Activated CD4-positive, alpha-beta memory T cell treated with anti-CD3 and anti-CD28 coated beads, Interleukin-2, amount 10 ng/mL, durations not matched to agents 7 days and 5 days (primary cell): ENCODE measurements at regions of chr2 and their contacts with region 1.

Region 1: DNA sequence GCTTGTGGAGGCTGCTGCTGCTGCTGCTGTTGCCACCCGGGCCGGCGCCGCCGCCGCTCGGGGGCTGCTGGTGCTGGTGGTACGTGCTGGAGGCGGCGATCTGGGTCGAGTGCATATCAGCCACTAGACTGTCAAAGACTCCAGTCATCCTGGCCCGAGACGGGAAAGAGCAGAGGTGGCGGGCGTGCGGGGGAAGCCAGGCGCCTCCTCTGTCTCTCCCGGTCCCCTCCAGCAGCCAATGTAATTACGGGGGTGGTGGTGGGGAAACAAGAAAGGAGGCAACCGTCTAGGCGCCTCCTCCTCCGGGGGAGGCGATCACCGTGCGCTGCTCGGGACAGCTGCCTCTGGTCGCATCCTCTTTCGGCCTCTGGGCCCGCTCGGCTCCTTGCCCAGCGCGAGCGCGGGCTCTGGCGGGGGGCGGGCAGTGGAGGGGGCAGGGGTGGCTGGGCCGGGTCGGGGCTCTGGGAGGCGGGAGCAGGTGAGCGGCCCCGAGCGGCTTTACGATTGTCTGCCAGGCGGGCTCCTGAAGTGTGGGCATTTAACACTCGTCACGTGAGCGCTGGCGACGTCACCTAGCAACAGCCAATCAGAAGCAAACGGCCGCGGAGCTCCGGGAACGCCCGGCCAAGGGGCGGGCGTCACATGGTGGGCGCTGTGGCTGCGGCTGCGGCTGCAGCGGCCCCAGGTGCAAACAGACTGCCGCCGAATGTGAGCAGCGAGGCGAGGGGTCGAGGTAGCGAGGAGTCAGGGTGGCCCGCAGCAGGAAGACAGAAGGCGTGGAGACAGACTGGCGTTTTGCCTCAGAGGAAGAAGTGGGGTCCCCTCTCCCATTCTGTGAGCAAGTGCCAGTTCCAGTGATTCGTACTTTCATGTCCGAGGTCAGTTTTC is at the start of gene DLX2:
- DNase-seq: peak; percentile 78
- H3K4me3 Mint-ChIP-seq: peak within 1 kb of the TSS; percentile 73
- H3K27ac Mint-ChIP-seq: no peak within 1 kb of the TSS
- H3K4me1 Mint-ChIP-seq: peaks cover 58% of the 10 kb centered on the region
- H3K27me3 Mint-ChIP-seq: peaks cover 80% of the 10 kb centered on the region
- total RNA-seq, gene DLX2: not detected

Region 2: DNA sequence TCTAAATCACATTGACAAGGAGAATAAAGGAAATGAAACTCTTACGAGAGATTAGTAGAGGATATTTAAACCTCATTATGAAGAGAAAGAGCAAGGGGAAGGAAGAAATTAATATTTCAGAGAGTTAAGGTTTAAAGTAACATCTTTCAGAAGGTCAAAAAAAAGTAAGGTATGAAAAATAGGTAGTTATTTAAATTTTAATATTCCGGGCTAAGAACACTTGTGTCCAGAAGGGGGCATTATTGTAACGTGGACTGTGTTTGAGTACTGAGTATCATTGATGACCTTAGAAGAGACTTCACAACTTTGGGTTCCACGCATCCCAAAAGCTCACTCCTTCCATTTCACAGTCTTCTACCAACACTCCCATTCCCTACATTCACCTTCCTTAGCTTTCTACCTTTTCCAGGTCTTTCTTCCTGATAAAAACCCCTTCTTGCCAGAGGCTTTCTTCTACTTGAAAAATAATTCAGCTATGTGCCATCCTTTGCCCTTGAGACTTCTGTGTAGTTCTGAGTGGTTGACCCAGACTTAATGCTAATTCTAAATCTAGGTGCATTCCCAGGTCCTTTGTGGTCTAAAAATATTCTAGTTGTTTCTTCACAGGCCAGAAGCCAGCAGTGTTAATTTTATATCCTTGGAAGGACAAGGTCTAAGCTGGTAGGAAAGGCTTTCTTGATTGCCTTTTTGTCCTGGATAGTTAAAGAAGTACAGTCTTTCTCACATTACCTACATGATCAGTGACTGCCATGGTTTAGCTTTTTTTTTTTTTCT is 398.9 kb before region 1 on chr2:
- CTCF ChIA-PET with region 1: interaction called, 49 read pairs
- POLR2A ChIA-PET with region 1: interaction called, 4 read pairs
- DNase-seq: no peak
- H3K4me3 Mint-ChIP-seq: no peak overlapping the region
- H3K27ac Mint-ChIP-seq: no peak overlapping the region
- H3K4me1 Mint-ChIP-seq: peaks cover 1% of the 10 kb centered on the region
- H3K27me3 Mint-ChIP-seq: no peaks in the 10 kb centered on the region

Region 3: DNA sequence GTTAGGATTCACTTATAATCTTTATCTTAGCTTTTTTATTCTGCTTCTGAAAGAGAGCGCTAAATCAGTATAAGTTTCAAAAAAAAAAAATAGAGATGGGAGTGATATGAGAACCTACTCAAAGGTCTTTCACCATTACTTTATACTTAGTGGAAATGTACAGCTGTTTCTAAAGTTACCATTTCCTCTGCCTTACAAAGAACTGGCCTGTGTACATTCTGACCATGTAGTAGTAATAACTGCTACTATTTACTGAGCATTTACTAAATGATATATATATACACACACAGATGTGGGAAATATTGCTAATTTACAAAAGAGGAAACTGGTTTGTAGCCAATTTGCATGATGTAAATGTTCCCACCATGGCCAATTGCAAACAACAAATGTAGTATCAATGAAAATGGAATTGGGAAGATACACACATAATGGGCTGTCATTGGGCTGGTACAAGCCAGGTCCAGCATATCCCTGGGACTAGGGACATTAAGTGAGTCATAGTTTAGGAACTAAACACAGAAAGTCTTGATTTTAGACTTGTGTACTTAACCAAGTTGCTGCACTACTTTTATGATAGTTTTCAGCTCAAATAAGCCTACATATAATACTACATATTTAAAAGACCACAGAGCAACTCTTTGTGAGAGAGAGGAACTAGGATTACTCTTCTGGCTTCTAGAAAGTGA is 348.2 kb before region 1 on chr2:
- CTCF ChIA-PET with region 1: no interaction called
- POLR2A ChIA-PET with region 1: no interaction called
- DNase-seq: no peak
- H3K4me3 Mint-ChIP-seq: no peak overlapping the region
- H3K27ac Mint-ChIP-seq: no peak overlapping the region
- H3K4me1 Mint-ChIP-seq: no peaks in the 10 kb centered on the region
- H3K27me3 Mint-ChIP-seq: no peaks in the 10 kb centered on the region

Region 4: GRCh38 chr2:171785450-171785849 is 317.2 kb before region 1 on chr2:
- CTCF ChIA-PET with region 1: no interaction called
- POLR2A ChIA-PET with region 1: no interaction called
- DNase-seq: no peak
- H3K4me3 Mint-ChIP-seq: no peak overlapping the region
- H3K27ac Mint-ChIP-seq: no peak overlapping the region
- H3K4me1 Mint-ChIP-seq: no peaks in the 10 kb centered on the region
- H3K27me3 Mint-ChIP-seq: no peaks in the 10 kb centered on the region

Region 5: GRCh38 chr2:172038604-172039003 is 64.0 kb before region 1 on chr2:
- CTCF ChIA-PET with region 1: no interaction called
- POLR2A ChIA-PET with region 1: no interaction called
- DNase-seq: no peak
- H3K4me3 Mint-ChIP-seq: no peak overlapping the region
- H3K27ac Mint-ChIP-seq: no peak overlapping the region
- H3K4me1 Mint-ChIP-seq: peaks cover 6% of the 10 kb centered on the region
- H3K27me3 Mint-ChIP-seq: no peaks in the 10 kb centered on the region

Region 6: GRCh38 chr2:172084734-172085459 is 17.7 kb before region 1 on chr2:
- CTCF ChIA-PET with region 1: interaction called, 39 read pairs
- POLR2A ChIA-PET with region 1: interaction called, 17 read pairs
- DNase-seq: peak; percentile 68
- H3K4me3 Mint-ChIP-seq: peak overlapping the region; percentile 74
- H3K27ac Mint-ChIP-seq: peak overlapping the region; percentile 8
- H3K4me1 Mint-ChIP-seq: peaks cover 66% of the 10 kb centered on the region
- H3K27me3 Mint-ChIP-seq: peaks cover 94% of the 10 kb centered on the region

Region 7: GRCh38 chr2:172090044-172090961 is 12.3 kb before region 1 on chr2:
- CTCF ChIA-PET with region 1: interaction called, 39 read pairs
- POLR2A ChIA-PET with region 1: interaction called, 12 read pairs
- DNase-seq: no peak
- H3K4me3 Mint-ChIP-seq: no peak overlapping the region
- H3K27ac Mint-ChIP-seq: no peak overlapping the region
- H3K4me1 Mint-ChIP-seq: peaks cover 48% of the 10 kb centered on the region
- H3K27me3 Mint-ChIP-seq: peaks cover 90% of the 10 kb centered on the region

Region 8: GRCh38 chr2:172113617-172114016 is 11.0 kb after region 1 on chr2:
- CTCF ChIA-PET with region 1: interaction called, 10 read pairs
- POLR2A ChIA-PET with region 1: no interaction called
- DNase-seq: no peak
- H3K4me3 Mint-ChIP-seq: no peak overlapping the region
- H3K27ac Mint-ChIP-seq: no peak overlapping the region
- H3K4me1 Mint-ChIP-seq: no peaks in the 10 kb centered on the region
- H3K27me3 Mint-ChIP-seq: peaks cover 33% of the 10 kb centered on the region

Region 9: DNA sequence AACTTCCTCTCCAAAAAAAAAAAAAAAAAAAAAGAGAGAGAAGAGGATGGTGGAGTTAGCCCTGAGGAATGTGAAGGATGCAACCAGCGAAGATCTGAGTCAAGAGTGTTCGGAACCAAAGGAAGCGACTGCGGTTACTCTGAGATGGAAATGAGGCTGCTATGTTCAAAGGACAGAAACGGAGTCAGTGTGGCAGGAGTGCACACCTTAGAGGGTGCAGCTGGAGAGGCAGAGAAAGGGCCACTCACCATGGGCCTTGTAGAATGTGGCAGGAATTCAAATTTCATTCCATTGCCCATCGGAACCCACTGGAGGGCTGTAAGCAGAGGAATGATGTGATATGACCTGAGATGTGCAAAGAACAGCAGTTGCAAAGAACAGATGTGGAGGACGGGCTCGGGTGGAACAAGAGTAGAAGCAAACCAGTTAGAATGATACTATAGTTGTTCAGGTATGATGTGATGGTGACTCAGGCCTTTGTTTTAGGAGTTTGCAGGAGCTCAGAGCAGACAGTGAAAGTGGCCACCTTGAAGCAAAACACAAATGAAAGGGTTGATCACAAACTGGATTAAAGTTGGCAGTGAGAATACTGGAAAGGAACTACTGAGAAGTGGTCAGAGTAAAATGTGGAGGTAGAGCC is 347.4 kb after region 1 on chr2:
- CTCF ChIA-PET with region 1: no interaction called
- POLR2A ChIA-PET with region 1: no interaction called
- DNase-seq: no peak
- H3K4me3 Mint-ChIP-seq: no peak overlapping the region
- H3K27ac Mint-ChIP-seq: peak overlapping the region; percentile 9
- H3K4me1 Mint-ChIP-seq: peaks cover 23% of the 10 kb centered on the region
- H3K27me3 Mint-ChIP-seq: peaks cover 2% of the 10 kb centered on the region